Head of caudate nucleus (tissue), 42 donors: ENCODE measurements at regions of chr5 and their contacts with region 1.

Region 1: DNA sequence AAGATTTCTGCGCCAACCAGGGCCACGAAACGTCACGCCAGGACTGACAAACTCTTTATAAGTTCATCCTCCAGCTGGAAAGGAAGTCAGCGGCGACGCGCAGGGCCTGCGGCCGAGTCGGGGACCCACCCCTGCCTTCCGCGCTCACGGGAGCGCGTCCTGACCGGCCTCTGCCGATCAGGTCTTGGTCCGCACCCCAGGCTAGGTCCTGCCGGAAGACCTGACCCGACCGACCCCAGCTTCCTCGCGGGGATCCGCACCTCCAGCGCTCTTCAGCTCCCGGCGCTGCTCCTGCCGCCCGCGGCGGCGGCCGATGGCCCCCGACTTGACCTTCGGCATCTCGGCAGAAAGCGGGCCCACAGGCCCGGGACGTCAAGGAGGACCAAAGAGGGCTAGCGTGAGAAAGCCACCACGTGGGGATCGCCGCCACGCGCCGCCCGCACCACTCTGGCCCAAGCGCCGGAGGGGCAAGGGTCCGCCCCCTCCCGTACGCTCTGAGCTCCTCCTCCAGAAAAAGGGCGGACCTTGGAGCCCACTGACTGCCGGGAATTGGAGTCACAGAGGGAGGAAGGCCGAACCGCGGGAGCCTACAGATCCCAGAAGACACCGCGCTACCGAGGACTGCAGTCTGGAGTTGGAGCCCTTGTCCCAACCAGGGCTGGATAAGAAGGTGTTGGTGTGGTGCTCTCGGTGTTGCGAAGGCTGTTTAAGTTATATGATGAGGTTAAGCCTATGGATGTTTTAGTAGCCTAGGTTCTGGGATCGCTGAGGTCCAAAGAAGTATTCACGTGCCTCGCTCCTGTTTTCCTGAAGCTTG is at the start of gene DIMT1:
- DNase-seq: peak; percentile 92 to 99 (median 97)

Region 2: DNA sequence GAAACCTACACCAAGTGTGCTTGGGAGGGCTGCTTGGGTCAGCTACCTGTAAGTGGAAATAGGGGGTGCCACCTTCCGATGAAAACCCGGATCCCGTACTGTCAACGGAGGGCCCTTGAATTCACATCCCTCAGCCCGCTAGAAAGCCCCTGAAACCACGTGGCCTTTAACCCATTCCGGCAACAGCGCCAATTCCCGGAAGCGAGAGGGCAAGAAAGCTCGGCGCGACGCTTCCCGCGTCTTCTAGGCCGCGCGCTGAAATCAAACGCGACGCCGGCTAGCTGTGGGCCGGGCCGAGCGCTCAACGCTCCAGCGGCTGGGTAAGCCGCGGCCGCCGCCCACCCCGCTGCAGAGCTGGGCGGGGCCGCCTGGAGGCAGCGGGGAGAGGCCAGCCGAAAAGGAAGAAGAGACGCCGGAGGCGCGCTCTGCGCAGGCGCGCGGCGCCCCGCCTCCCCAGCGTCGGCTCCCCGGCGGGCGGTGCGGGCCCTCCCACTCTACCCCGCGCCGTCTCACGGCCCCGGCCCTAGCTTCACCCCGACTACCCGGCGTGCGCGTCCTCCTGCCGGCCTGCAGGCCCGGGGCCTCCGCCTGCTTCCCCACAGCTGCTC is 97.8 kb before region 1 on chr5 and contains the start of gene KIF2A:
- intact Hi-C with region 1: loop called (anchors 5 kb)
- DNase-seq: peak; percentile 57 to 95 (median 89)

Region 3: GRCh38 chr5:62720031-62720441 is 316.4 kb after region 1 on chr5:
- intact Hi-C with region 1: no loop called
- DNase-seq: no peak